Panc1 (cell line): ENCODE measurements at regions of chr15 and their contacts with region 1.

Region 1: GRCh38 chr15:43465105-43465504 is 27.9 kb downstream of the TP53BP1 start:
- DNase-seq: no peak
- ATAC-seq: no peak
- H3K4me3 ChIP-seq: no peak overlapping the region
- H3K27ac ChIP-seq: no peak overlapping the region
- H3K4me1 ChIP-seq: no peaks in the 10 kb centered on the region
- H3K27me3 ChIP-seq: no peaks in the 10 kb centered on the region
- CTCF ChIP-seq: no peak

Region 2: DNA sequence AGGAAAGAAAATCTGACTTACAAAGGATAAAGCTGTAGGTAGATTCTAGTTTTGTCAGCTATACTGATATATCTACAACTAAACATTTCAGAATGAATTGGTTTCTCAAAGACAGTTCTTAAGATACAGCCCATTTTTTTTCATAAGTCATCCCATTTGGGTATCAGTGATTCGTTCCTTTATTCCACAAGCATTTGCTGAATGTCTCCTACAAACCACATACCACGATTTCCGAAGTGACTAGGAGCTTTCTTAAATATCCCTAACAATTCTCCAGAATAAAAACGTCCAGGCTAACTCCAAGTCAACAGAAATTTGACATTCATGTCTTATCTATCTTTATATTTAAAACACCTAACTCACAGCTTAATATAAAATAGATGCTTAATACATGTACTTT is 31.9 kb before region 1 on chr15:
- CTCF ChIA-PET with region 1: no interaction called
- POLR2A ChIA-PET with region 1: interaction called, 12 read pairs
- in situ Hi-C with region 1: no loop called
- intact Hi-C with region 1: no loop called
- DNase-seq: no peak
- ATAC-seq: no peak
- H3K4me3 ChIP-seq: no peak overlapping the region
- H3K27ac ChIP-seq: no peak overlapping the region
- H3K4me1 ChIP-seq: no peaks in the 10 kb centered on the region
- H3K27me3 ChIP-seq: no peaks in the 10 kb centered on the region
- CTCF ChIP-seq: no peak